Dorsolateral prefrontal cortex (tissue), 120 donors: ENCODE measurements at regions of chr1 and their contacts with region 1.

Region 1: DNA sequence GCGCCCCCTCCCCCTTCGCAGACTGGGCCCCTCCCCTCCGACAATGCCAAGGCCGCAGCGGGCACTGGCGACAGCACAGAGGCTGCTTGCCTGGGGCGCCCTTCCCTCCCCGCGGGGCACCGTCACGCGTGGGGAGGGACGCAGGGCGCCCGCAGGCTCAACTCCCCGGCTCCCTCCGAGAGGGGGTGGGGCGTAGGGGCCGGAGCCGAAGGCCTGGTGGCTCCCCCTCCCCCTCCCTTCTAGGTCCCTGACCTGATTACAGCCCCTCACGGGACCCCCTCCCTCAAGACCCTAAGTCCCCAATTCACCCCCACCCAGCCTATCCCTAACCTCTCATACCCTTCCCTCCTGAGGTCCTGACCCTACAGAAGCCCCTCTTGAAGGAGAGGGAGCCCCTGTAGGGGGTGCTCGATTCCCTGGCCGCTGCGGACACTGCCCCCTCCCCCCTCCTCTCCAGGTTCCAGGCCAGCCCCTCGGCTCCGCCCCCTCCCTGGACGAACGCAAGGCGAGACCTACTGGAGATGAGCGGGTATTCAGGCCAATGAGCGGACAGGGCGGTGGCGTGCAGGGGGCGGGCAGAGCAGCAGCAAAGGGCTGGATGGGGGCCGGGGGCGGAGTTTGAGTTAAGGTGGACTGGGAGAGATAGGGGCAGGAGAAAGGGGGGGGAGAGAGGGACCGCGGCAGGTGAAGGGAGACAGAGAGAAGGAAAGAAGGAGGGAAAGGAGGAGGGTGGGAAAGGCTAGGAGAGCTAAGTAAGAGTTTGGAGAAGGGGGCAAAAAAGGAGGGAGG is 733 bp upstream of the ZBTB7B start:
- DNase-seq: peak; percentile 100
- H3K4me3 ChIP-seq: peak overlapping the region; percentile 67 to 93 (median 81)
- H3K27ac ChIP-seq: peak overlapping the region; percentile 91 to 99 (median 98)
- H3K27me3 ChIP-seq: no peaks in the 10 kb centered on the region
- CTCF ChIP-seq: peak in 55 of 56 donors; percentile 15 to 75 (median 52)

Region 2: DNA sequence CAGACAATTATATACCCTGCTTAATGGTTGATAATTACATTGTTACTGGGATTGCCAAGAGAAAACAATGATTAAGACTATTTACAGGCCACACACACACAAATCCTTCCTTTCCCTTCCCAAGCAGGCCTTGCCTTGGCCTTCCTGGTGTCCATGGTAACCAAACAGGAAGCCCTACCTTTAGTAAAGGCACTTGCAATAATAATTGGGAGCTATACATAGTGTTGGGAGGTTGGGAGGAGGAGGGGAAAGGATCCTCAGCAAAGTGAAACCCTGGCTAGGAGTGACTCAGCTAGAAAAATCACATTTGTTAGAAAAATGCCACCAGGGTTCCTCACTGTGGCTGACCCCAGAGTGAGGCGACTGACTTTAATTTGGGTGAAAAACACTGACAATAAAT is 271.6 kb before region 1 on chr1:
- intact Hi-C with region 1: no loop called
- DNase-seq: no peak
- H3K4me3 ChIP-seq: no peak overlapping the region
- H3K27ac ChIP-seq: peak overlapping the region in 54 of 59 donors; percentile 3 to 88 (median 69)
- H3K27me3 ChIP-seq: no peaks in the 10 kb centered on the region
- CTCF ChIP-seq: no peak

Region 3: GRCh38 chr1:154961497-154962262 is 40.2 kb before region 1 on chr1 and contains the start of gene PYGO2:
- intact Hi-C with region 1: loop called (anchors 5 kb)
- DNase-seq: peak in 9 of 10 donors; percentile 62 to 87 (median 72)
- H3K4me3 ChIP-seq: peak within 1 kb of the TSS; percentile 66 to 99 (median 92)
- H3K27ac ChIP-seq: peak within 1 kb of the TSS; percentile 80 to 100 (median 99)
- H3K27me3 ChIP-seq: no peaks in the 10 kb centered on the region
- CTCF ChIP-seq: peak in 55 of 56 donors; percentile 20 to 93 (median 72)
- total RNA-seq, gene PYGO2: 26.9 to 46.0 (median 33.8) TPM

Region 4: GRCh38 chr1:154982897-154983648 is 18.8 kb before region 1 on chr1 and contains the start of gene FLAD1:
- intact Hi-C with region 1: loop called in 1 of 2 experiments (anchors 2 kb)
- DNase-seq: peak; percentile 89 to 99 (median 96)
- H3K4me3 ChIP-seq: peak within 1 kb of the TSS; percentile 61 to 99 (median 84)
- H3K27ac ChIP-seq: peak within 1 kb of the TSS in 51 of 59 donors; percentile 8 to 92 (median 78)
- H3K27me3 ChIP-seq: no peaks in the 10 kb centered on the region
- CTCF ChIP-seq: peak in 25 of 56 donors; percentile 4 to 50 (median 24)
- total RNA-seq, gene FLAD1: 16.1 to 42.6 (median 25.5) TPM

Region 5: DNA sequence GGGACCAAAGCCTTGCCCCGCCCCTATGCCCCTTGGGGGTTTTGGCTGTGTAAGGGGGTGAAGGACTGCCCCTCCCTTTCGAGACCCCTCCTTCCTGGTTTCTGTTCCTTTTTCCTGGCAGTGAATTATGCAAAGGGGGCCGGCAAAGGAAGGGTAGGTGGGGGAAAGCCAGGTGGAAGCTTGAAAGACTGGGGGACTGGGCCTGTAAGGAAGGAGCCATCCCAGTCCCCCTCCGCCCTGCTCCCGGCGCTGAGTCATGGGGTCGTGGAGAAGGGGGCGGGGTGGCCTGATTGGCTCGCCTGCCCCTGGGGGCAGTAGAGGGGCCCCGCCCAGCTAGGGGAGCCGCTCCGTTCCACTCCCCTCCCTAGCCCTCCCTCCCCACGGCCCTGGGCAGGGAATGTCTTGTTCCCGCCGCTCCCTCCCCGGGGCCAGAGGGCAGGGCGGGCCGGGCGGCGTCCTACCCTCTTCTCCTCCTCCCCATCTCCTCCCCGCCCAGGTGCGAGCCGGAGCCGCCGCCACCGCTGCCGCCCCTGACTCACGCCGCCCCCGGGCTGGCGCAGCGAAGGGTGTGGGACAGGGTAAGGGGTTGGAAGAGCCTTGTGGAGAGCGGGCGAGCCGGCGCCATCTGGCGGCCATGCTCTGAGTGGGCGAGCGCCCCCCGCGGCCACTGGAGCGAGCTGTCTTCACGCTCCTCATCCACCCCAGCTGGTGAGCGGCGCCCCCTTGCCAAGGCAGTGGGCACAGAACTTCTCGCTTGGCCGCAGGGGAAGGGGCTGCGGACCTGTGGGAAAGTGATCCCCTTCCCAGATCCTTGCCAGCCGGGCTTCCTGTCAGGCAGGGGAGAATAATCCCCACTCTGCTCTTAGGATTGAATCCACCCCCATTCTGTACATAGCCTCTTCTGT is 15.4 kb after region 1 on chr1:
- intact Hi-C with region 1: loop called (anchors 2 kb)
- DNase-seq: peak; percentile 81 to 93 (median 84)
- H3K4me3 ChIP-seq: peak overlapping the region; percentile 27 to 70 (median 59)
- H3K27ac ChIP-seq: peak overlapping the region; percentile 35 to 99 (median 90)
- H3K27me3 ChIP-seq: no peaks in the 10 kb centered on the region
- CTCF ChIP-seq: peak; percentile 82 to 100 (median 99)

Region 6: GRCh38 chr1:155050560-155051341 is 48.9 kb after region 1 on chr1 and contains the start of gene ADAM15:
- intact Hi-C with region 1: loop called in 1 of 2 experiments (anchors 5 kb)
- DNase-seq: peak; percentile 58 to 88 (median 70)
- H3K4me3 ChIP-seq: peak within 1 kb of the TSS; percentile 53 to 96 (median 81)
- H3K27ac ChIP-seq: peak within 1 kb of the TSS; percentile 51 to 98 (median 89)
- H3K27me3 ChIP-seq: no peaks in the 10 kb centered on the region
- CTCF ChIP-seq: peak; percentile 54 to 94 (median 84)
- total RNA-seq, gene ADAM15: 32.1 to 108 (median 62.7) TPM